ENCODE measurements at regions of chr7 and their contacts with region 1.

Region 1: GRCh38 chr7:152336754-152337368 is 98.9 kb downstream of the KMT2C start:
- DNase-seq: peak in 5 of 7 donors; percentile 25 to 42 (median 29)
- H3K4me3 ChIP-seq: no peak overlapping the region
- H3K27ac ChIP-seq: no peak overlapping the region
- H3K4me1 ChIP-seq: peaks cover 6 to 39% of the 10 kb centered on the region in 2 donors
- H3K27me3 ChIP-seq: no peaks in the 10 kb centered on the region
- CTCF ChIP-seq: peak; percentile 20 to 57 (median 48)
- POLR2A ChIP-seq: no peak

Region 2: DNA sequence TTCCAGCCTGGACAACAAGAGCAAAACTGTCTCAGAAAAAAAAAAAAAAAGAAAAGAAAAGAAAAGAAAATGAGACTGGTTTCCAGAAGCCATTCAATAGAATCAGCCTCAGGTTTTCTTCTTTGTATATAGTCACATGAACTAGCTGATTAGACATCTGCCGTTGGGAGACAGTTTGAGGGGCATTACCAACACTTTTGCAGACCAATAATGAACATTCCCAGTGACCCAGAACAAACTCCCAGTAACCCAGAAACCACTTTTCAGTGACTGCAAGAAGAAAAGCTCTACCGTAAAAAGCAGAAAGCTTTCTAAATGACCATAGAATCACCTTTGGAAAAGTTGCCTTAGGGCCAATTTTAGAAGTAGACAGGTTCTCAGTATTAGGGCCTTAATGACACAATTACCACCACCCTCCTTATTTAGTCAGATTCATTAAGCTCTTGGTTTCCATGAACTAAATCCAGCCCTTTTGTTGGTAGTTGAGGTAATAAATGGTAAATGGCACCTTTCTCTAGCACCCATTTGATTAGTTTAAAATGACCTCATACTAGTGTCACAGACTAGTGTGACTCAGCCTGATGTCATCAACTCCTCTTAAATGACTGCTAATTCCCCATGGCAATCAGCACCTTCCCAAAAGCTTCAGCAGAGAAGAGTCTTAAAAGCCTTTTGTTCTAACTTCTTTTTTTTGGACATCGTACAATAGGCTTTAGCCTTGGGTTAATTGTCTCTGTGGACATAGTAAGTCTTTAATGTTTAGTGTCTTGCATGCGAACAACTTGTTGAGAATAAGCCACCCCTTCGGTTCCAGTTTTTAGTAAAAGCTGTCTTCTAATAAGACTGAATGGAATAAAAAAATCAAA is 372.7 kb after region 1 on chr7:
- intact Hi-C with region 1: loop called (anchors 10 kb)
- DNase-seq: no peak
- H3K4me3 ChIP-seq: no peak overlapping the region
- H3K27ac ChIP-seq: no peak overlapping the region
- H3K4me1 ChIP-seq: no peaks in the 10 kb centered on the region
- H3K27me3 ChIP-seq: no peaks in the 10 kb centered on the region
- CTCF ChIP-seq: no peak
- POLR2A ChIP-seq: no peak